ENCODE measurements at regions of chr6 and their contacts with region 1.

Region 1: GRCh38 chr6:27188885-27189418 is 58.5 kb upstream of the PRSS16 start:
- DNase-seq: peak; percentile 34 to 87
- ATAC-seq: peak; percentile 85 to 86 (median 86)
- H3K4me3 ChIP-seq: peak overlapping the region; percentile 56
- H3K4me3 Mint-ChIP-seq: peak overlapping the region; percentile 94
- H3K27ac ChIP-seq: peak overlapping the region; percentile 58
- H3K27ac Mint-ChIP-seq: peak overlapping the region; percentile 74 to 88
- H3K4me1 ChIP-seq: peaks cover 11% of the 10 kb centered on the region
- H3K4me1 Mint-ChIP-seq: peaks cover 18 to 21% of the 10 kb centered on the region in 2 donors
- H3K27me3 ChIP-seq: no peaks in the 10 kb centered on the region
- H3K27me3 Mint-ChIP-seq: no peaks in the 10 kb centered on the region
- CTCF ChIP-seq: peak; percentile 89

Region 2: DNA sequence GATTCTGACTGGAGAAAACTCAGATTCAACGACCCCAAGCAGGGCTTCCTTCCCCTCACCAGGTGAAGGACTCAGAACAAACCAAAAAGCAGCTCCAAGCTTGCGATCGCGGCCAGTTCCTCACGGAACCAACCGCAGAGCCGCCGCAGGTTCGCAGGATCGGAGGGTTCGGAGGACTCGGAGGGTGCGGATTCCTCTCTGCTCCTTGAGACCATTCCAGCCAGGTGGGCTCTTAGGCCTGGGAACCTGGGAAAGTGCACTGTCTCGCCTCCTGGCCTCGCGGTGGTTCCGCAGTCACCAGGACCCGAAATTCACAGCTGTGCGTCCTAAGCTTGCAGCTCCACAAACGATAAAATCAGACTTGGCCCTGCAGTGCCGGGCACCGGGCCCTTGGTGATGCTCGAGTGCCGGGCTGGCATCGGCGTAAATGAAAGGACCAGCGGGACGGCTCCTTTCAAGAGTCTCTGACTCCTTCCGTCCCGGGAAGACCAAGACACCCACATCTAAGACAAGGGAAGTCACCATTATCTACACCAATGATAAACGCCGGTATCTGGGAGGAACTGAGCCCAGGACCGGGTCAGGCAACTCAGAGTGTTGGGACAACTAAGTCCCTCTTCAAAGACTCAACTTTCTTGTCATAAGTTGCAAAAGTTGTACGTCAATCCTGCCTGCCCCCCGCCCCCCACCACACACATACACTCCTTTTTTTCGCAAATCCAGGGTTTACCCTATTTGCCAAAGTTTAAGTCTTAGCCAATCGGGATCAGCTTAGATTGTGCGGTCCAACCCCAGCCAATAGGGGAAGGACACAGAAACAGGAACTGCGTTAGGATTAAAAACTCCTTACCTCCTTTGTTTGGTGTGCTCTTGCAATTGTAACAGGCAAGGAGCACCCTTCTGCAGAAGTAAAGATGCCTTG is 11.2 kb before region 1 on chr6:
- intact Hi-C with region 1: loop called (anchors 1 kb)
- DNase-seq: peak; percentile 70 to 86
- ATAC-seq: peak; percentile 79 to 88 (median 83)
- H3K4me3 ChIP-seq: peak overlapping the region; percentile 81
- H3K4me3 Mint-ChIP-seq: peak overlapping the region; percentile 95
- H3K27ac ChIP-seq: peak overlapping the region; percentile 66
- H3K27ac Mint-ChIP-seq: peak overlapping the region; percentile 92 to 98
- H3K4me1 ChIP-seq: peaks cover 13% of the 10 kb centered on the region
- H3K4me1 Mint-ChIP-seq: peaks cover 25 to 26% of the 10 kb centered on the region in 2 donors
- H3K27me3 ChIP-seq: no peaks in the 10 kb centered on the region
- H3K27me3 Mint-ChIP-seq: peaks cover 0 to 9% of the 10 kb centered on the region in 2 donors
- CTCF ChIP-seq: peak; percentile 59

Region 3: GRCh38 chr6:27518881-27519795 is 330.2 kb after region 1 on chr6:
- intact Hi-C with region 1: loop called (anchors 1 kb)
- DNase-seq: peak; percentile 49 to 88
- ATAC-seq: peak; percentile 61 to 81 (median 81)
- H3K4me3 ChIP-seq: peak overlapping the region; percentile 82
- H3K4me3 Mint-ChIP-seq: peak overlapping the region; percentile 91
- H3K27ac ChIP-seq: peak overlapping the region; percentile 71
- H3K27ac Mint-ChIP-seq: peak overlapping the region; percentile 87 to 88
- H3K4me1 ChIP-seq: peaks cover 11% of the 10 kb centered on the region
- H3K4me1 Mint-ChIP-seq: peaks cover 16 to 17% of the 10 kb centered on the region in 2 donors
- H3K27me3 ChIP-seq: peaks cover 9% of the 10 kb centered on the region
- H3K27me3 Mint-ChIP-seq: peaks cover 29 to 46% of the 10 kb centered on the region in 2 donors
- CTCF ChIP-seq: peak; percentile 79

Region 4: GRCh38 chr6:27687154-27688013 is 498.4 kb after region 1 on chr6:
- intact Hi-C with region 1: loop called (anchors 5 kb)
- DNase-seq: peak; percentile 67 to 88
- ATAC-seq: peak; percentile 75 to 83 (median 76)
- H3K4me3 ChIP-seq: peak overlapping the region; percentile 52
- H3K4me3 Mint-ChIP-seq: peak overlapping the region; percentile 95
- H3K27ac ChIP-seq: no peak overlapping the region
- H3K27ac Mint-ChIP-seq: peak overlapping the region; percentile 94 to 96
- H3K4me1 ChIP-seq: peaks cover 12% of the 10 kb centered on the region
- H3K4me1 Mint-ChIP-seq: peaks cover 14 to 22% of the 10 kb centered on the region in 2 donors
- H3K27me3 ChIP-seq: peaks cover 2% of the 10 kb centered on the region
- H3K27me3 Mint-ChIP-seq: peaks cover 8 to 32% of the 10 kb centered on the region in 2 donors
- CTCF ChIP-seq: peak; percentile 53

Region 5: GRCh38 chr6:28725890-28726348 is 1537.0 kb after region 1 on chr6:
- intact Hi-C with region 1: no loop called
- DNase-seq: no peak
- ATAC-seq: no peak
- H3K4me3 ChIP-seq: no peak overlapping the region
- H3K4me3 Mint-ChIP-seq: no peak overlapping the region
- H3K27ac ChIP-seq: no peak overlapping the region
- H3K27ac Mint-ChIP-seq: no peak overlapping the region
- H3K4me1 ChIP-seq: peaks cover 3% of the 10 kb centered on the region
- H3K4me1 Mint-ChIP-seq: peaks cover 18 to 22% of the 10 kb centered on the region in 2 donors
- H3K27me3 ChIP-seq: peaks cover 32% of the 10 kb centered on the region
- H3K27me3 Mint-ChIP-seq: peaks cover 33 to 58% of the 10 kb centered on the region in 2 donors
- CTCF ChIP-seq: no peak